WTC11 (cell line): ENCODE measurements at regions of chr12 and their contacts with region 1.

Region 1: DNA sequence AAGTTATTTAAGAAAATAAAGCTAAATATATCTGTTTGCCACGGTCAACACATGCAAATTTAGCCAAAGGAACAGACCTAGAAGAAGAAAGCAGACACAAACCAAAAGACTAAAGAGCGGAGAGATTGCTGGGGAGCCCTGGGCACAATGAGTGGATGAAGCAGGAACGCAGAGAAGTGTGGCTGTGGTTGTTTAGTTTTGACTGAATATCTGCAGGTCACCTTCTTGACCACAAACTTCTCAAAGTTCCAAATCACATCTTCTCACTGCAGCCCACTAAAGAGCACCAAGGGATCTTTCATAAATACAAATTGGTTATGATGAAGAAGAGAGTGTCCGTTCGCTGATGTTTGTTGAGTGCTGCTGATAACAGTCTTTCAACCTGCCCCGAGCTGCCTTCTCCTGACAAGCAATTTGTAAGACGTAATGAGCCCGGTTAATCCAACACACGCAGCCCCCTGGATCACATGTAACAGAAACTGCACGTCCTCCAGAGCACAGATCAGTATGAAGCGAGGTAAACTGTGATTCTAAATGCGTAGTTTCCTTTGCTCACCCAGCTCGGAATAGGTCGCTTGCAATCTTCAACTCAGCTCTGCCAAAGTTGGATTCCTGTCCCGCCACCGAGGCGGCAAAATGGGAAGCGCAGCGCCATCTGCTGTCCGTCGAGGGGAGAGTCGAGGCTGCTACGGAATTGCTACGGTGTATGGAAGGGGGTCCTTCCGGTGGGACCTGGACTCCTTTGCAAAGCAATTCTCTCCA is 120.8 kb downstream of the GXYLT1 start:
- DNase-seq: peak; percentile 83
- ATAC-seq: peak; percentile 96
- H3K4me3 Mint-ChIP-seq: peak overlapping the region; percentile 55
- H3K27ac Mint-ChIP-seq: no peak overlapping the region
- H3K4me1 Mint-ChIP-seq: peaks cover 11% of the 10 kb centered on the region
- H3K27me3 Mint-ChIP-seq: peaks cover 31% of the 10 kb centered on the region
- CTCF ChIP-seq: peak; percentile 86

Region 2: DNA sequence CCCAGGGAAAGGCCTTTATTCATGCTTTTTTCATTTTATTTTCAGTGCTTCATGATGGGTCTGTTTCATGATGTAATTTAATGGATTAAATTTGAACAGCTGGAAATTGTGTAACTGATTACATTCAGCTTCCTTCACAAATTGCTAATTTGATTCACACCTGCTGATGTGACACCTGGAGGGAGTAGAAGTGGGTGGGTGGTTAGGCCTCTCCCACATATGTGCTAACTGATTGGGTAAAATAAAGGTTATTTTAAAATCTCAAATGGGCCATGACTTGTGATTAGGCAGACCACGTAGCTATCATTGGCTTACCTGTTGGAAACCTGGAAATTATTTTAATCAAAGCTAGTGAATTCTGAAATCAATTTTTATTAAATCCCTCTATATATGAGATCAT is 21.4 kb before region 1 on chr12:
- CTCF ChIA-PET with region 1: interaction called, 11 read pairs
- POLR2A ChIA-PET with region 1: no interaction called
- DNase-seq: no peak
- ATAC-seq: no peak
- H3K4me3 Mint-ChIP-seq: no peak overlapping the region
- H3K27ac Mint-ChIP-seq: no peak overlapping the region
- H3K4me1 Mint-ChIP-seq: peaks cover 9% of the 10 kb centered on the region
- H3K27me3 Mint-ChIP-seq: no peaks in the 10 kb centered on the region
- CTCF ChIP-seq: no peak